ENCODE measurements at regions of chr18 and their contacts with region 1.

Region 1: GRCh38 chr18:25805323-25805722 is 285.1 kb downstream of the SS18 start:
- DNase-seq: no peak

Region 2: DNA sequence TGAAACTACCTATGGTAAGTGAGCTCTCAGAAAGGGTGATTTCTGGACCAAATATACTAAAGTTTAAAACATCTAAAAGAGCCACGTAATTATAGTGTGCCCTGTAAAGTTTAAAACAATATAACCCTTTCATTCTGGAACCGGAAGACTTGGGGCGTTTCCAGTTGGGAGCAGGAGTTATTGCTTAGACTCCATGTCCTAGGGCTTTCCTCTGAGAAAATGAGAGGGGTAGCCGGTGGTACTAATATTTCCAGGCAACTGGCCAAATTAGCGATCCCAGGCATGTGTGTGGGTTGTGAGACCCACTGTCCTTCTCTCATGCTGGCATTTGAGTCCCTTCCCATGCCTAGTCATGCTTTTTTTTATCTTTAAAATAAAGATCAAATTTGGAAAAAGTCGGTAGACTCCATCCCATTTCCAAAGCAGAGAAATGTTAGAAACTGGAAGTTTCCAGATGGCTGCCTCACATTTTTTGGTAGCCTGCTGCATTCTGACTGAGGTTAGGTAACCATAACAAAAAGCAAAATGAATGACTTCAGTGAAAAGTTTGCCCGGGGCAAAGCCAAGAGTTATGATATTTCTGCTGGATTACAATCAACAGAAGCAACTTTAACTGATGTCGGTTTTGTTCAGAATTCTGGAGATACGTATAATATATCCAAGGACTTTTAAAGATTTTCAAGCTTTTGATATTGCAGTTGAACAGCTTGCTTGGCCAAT is 57.7 kb after region 1 on chr18:
- intact Hi-C with region 1: loop called (anchors 10 kb)
- DNase-seq: no peak

Region 3: DNA sequence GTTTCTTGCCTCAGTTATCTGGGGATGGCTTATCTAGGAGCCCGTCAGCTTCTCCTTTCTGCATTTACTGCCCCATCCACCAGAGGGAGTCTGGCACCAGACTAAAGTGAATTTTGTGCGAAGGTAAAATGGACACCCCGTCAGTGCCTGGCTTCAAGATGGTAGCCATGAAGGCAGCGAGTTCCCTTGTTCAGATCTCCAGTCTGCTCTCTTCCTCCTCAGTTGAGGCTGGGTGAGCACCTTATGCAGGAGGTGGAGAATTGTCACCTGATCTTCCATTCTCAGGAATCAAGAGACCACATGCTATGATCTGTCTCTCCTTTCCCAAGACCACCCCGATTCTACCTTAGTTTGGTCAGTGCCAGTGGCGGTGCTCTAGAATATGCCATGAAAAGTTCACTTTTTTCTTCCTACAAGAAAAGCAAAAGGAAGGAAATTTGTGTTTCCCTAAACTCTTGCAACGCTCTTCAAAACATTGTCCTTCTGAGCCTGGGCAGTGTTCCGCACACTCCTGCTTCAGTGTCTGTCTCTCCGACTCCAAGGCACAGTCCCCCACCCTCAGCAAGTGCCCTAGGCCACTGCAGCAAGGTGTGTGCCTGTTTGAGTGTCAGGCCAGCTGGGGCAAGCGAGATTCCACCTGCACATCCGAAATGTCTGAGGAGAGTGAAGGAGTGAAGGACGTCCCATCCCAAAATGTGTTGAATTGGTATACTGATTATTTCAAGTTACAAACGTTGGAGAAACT is 116.5 kb after region 1 on chr18:
- intact Hi-C with region 1: no loop called
- DNase-seq: peak in 2 of 10 donors; percentile 24 to 70

Region 4: DNA sequence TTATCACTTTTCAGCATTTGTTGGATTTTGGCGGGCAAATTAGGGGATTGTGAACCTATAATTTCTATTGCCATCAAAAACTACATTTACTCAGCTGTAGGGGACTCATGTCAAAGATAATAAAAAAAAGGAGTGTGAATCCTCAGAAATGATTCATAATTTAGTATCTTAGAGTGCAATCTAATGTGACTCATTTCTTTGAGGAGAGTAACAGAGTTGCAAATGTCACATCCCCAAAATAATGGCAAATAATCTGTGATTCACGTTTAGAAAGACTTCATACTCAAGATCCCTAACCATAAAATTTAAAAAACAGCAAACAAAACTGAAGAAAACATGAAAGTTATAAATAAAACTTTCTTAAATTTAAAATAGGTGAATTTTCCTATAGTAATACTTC is 1998.6 kb after region 1 on chr18:
- intact Hi-C with region 1: no loop called
- DNase-seq: no peak

Measured in posterior cingulate gyrus (tissue), 11 donors.